Esophagus muscularis mucosa (tissue), 4 donors: ENCODE measurements at regions of chr3 and their contacts with region 1.

Region 1: GRCh38 chr3:69306239-69307185 is 79.4 kb downstream of the FRMD4B start:
- DNase-seq: no peak
- H3K4me3 ChIP-seq: no peak overlapping the region
- H3K27ac ChIP-seq: peak overlapping the region; percentile 35 to 68 (median 64)
- H3K4me1 ChIP-seq: peaks cover 5 to 14% (median 9%) of the 10 kb centered on the region in 4 donors
- H3K27me3 ChIP-seq: no peaks in the 10 kb centered on the region
- CTCF ChIP-seq: peak; percentile 82 to 90 (median 89)
- EP300 ChIP-seq: no peak
- POLR2A ChIP-seq: no peak

Region 2: DNA sequence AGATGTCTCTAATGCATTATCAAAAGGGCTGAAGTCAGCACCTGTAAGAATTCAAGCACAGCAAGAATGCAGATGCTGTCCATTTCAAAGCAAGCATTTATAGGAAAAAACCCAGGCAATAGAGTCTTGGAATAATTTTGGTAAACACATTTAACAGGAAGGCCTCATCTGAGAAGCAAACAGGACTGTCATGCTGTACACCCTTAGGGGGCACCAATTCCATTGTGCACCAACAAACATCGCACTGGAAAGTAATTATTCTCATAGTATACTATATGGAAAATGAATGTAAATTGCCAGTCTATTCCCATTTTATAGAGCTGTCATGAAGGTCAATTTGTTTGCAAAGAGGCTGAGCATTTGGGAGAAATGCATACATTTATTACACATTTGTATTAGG is 1404.8 kb before region 1 on chr3:
- intact Hi-C with region 1: no loop called
- DNase-seq: no peak
- H3K4me3 ChIP-seq: no peak overlapping the region
- H3K27ac ChIP-seq: no peak overlapping the region
- H3K4me1 ChIP-seq: no peaks in the 10 kb centered on the region
- H3K27me3 ChIP-seq: no peaks in the 10 kb centered on the region
- CTCF ChIP-seq: no peak
- EP300 ChIP-seq: no peak
- POLR2A ChIP-seq: no peak

Region 3: DNA sequence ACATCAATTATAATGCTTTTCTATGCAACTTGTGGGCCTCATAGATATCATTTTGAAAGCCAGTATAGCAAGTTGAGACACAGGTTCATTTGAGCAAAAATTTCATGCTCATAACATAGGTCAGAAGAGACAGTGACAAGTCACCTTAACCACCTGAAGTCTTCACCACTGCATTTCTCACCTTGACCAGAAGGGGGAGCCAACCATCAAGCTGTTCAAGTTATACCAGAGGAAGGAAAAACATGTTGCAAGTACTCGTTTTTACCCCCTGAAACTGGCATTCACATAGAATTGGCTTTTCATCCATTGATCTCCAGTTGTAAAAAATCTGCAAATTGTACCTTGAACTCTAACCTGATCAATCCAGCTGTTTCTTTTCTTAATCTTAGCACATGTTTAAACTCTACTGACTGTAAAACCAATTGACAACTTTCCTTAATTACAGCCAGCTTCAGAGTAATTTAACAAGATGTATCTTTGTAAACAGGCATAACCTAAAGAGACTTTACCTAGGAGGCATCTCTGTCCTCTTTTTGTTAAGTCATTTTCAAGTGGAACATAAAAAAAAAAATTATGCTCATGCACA is 185.5 kb before region 1 on chr3:
- intact Hi-C with region 1: loop called (anchors 5 kb)
- DNase-seq: no peak
- H3K4me3 ChIP-seq: peak overlapping the region in 3 of 4 donors; percentile 19 to 42 (median 36)
- H3K27ac ChIP-seq: peak overlapping the region in 3 of 4 donors; percentile 47 to 63 (median 59)
- H3K4me1 ChIP-seq: peaks cover 0 to 26% (median 19%) of the 10 kb centered on the region in 4 donors
- H3K27me3 ChIP-seq: no peaks in the 10 kb centered on the region
- CTCF ChIP-seq: peak; percentile 88 to 95 (median 95)
- EP300 ChIP-seq: no peak
- POLR2A ChIP-seq: no peak

Region 4: DNA sequence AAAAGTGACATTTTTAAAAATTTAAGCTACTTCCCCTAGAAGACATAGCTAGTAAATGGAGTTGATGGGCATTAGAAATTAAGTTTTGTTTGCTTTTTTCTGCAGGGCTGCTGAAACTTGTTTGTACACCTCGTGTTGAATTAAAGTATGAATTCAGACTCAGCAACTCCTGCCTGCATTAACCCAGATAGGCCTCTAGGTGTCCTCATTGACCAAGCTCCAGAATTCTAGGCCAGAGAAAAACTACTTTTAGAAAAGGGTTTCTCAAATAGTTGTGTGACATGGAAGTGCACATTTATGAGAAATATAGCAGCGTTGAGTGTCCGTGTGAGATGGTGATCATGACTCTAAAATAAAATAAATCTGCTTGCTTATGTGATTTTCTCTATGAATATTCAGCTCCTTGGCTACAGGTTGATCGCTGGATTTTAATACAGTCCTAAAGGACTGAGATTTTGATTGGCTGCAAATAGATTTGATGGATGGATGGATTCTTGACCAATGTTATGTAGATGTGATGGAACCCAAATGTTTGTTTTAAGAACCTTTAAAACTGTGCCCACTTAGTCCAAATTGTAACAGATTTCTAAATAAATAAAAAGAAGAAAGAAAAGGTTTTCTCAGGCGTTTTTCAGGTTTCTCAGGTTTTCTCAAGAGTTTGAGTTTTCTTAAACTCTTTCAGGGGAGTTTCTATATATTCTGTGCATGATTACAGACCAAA is 144.8 kb before region 1 on chr3:
- intact Hi-C with region 1: loop called (anchors 2 kb)
- DNase-seq: no peak
- H3K4me3 ChIP-seq: no peak overlapping the region
- H3K27ac ChIP-seq: no peak overlapping the region
- H3K4me1 ChIP-seq: no peaks in the 10 kb centered on the region
- H3K27me3 ChIP-seq: no peaks in the 10 kb centered on the region
- CTCF ChIP-seq: peak; percentile 93 to 96 (median 95)
- EP300 ChIP-seq: no peak
- POLR2A ChIP-seq: no peak

Region 5: GRCh38 chr3:69385723-69386555 is 79.4 kb after region 1 on chr3 and contains the start of gene FRMD4B:
- intact Hi-C with region 1: no loop called
- DNase-seq: no peak
- H3K4me3 ChIP-seq: peak within 1 kb of the TSS; percentile 55 to 66 (median 57)
- H3K27ac ChIP-seq: peak within 1 kb of the TSS; percentile 33 to 56 (median 35)
- H3K4me1 ChIP-seq: peaks cover 12 to 22% (median 19%) of the 10 kb centered on the region in 4 donors
- H3K27me3 ChIP-seq: peaks cover 0 to 70% (median 0%) of the 10 kb centered on the region in 4 donors
- CTCF ChIP-seq: peak in 1 of 3 experiments; percentile 17
- EP300 ChIP-seq: no peak
- POLR2A ChIP-seq: no peak
- total RNA-seq, gene FRMD4B: 10.5 to 22.0 (median 14.8) TPM

Region 6: GRCh38 chr3:69425261-69425660 is 118.7 kb after region 1 on chr3:
- intact Hi-C with region 1: loop called (anchors 10 kb)
- DNase-seq: no peak
- H3K4me3 ChIP-seq: no peak overlapping the region
- H3K27ac ChIP-seq: no peak overlapping the region
- H3K4me1 ChIP-seq: peaks cover 0 to 6% (median 3%) of the 10 kb centered on the region in 4 donors
- H3K27me3 ChIP-seq: no peaks in the 10 kb centered on the region
- CTCF ChIP-seq: peak; percentile 30 to 49 (median 40)
- EP300 ChIP-seq: no peak
- POLR2A ChIP-seq: no peak

Region 7: GRCh38 chr3:69671082-69671952 is 364.8 kb after region 1 on chr3:
- intact Hi-C with region 1: loop called (anchors 5 kb)
- DNase-seq: no peak
- H3K4me3 ChIP-seq: no peak overlapping the region
- H3K27ac ChIP-seq: no peak overlapping the region
- H3K4me1 ChIP-seq: peaks cover 7 to 12% (median 9%) of the 10 kb centered on the region in 4 donors
- H3K27me3 ChIP-seq: no peaks in the 10 kb centered on the region
- CTCF ChIP-seq: peak; percentile 81 to 86 (median 83)
- EP300 ChIP-seq: no peak
- POLR2A ChIP-seq: no peak